ENCODE measurements at regions of chr7 and their contacts with region 1.

Region 1: GRCh38 chr7:158976849-158977593 is 120.7 kb downstream of the DYNC2I1 start:
- DNase-seq: peak; percentile 63
- H3K4me3 ChIP-seq: peak overlapping the region; percentile 14 to 29 (median 20)
- H3K27ac ChIP-seq: no peak overlapping the region
- H3K4me1 ChIP-seq: peaks cover 3% of the 10 kb centered on the region
- H3K27me3 ChIP-seq: no peaks in the 10 kb centered on the region
- CTCF ChIP-seq: peak; percentile 86 to 91

Region 2: GRCh38 chr7:158695726-158696452 is 281.1 kb before region 1 on chr7:
- CTCF ChIA-PET with region 1: interaction called, 3 read pairs
- dilution Hi-C with region 1: no loop called
- in situ Hi-C with region 1: loop called in 1 of 2 experiments (anchors 10 kb)
- intact Hi-C with region 1: loop called (anchors 1 kb)
- DNase-seq: peak; percentile 30
- H3K4me3 ChIP-seq: no peak overlapping the region
- H3K27ac ChIP-seq: no peak overlapping the region
- H3K4me1 ChIP-seq: no peaks in the 10 kb centered on the region
- H3K27me3 ChIP-seq: no peaks in the 10 kb centered on the region
- CTCF ChIP-seq: peak; percentile 33 to 56

Region 3: DNA sequence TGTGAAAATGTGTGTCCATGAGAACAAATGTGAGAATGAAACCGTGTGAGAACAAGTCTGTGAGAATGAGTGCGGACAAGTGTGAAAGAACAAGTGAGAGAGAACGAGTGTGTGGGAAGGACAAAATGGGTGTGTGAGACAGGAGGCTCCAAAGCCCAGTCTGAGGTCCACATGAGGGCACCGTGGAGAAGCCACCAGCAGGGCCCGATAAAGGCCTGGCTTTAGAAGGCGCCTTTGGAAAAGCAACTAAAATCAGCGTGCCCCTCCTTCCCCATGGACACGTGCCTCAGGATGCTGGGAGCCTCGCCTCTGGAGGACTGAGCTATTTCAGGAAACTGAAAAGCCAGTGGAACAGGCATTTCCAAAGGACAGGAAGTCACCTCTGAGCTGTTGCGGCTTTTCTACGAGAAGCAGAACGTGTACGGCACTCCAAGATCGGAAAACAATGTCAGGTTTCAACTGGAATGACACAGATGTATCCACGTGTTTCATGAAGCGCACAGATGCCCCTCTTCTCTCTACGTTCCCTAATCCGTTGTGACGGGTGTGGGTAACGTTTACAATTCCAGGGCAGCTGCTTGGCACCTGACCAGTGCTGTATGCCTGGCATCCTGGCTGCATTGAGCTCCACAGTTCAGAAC is 194.1 kb before region 1 on chr7:
- CTCF ChIA-PET with region 1: no interaction called
- dilution Hi-C with region 1: no loop called
- in situ Hi-C with region 1: no loop called
- intact Hi-C with region 1: loop called (anchors 2 kb)
- DNase-seq: no peak
- H3K4me3 ChIP-seq: no peak overlapping the region
- H3K27ac ChIP-seq: no peak overlapping the region
- H3K4me1 ChIP-seq: no peaks in the 10 kb centered on the region
- H3K27me3 ChIP-seq: no peaks in the 10 kb centered on the region
- CTCF ChIP-seq: peak; percentile 47 to 48

Region 4: GRCh38 chr7:158885624-158886023 is 91.4 kb before region 1 on chr7:
- CTCF ChIA-PET with region 1: interaction called, 6 read pairs
- dilution Hi-C with region 1: no loop called
- in situ Hi-C with region 1: no loop called
- intact Hi-C with region 1: loop called (anchors 5 kb)
- DNase-seq: no peak
- H3K4me3 ChIP-seq: no peak overlapping the region
- H3K27ac ChIP-seq: no peak overlapping the region
- H3K4me1 ChIP-seq: no peaks in the 10 kb centered on the region
- H3K27me3 ChIP-seq: no peaks in the 10 kb centered on the region
- CTCF ChIP-seq: peak; percentile 20 to 25

Region 5: GRCh38 chr7:159227433-159227832 is 250.4 kb after region 1 on chr7:
- CTCF ChIA-PET with region 1: no interaction called
- dilution Hi-C with region 1: no loop called
- in situ Hi-C with region 1: no loop called
- intact Hi-C with region 1: no loop called
- DNase-seq: no peak
- H3K4me3 ChIP-seq: no peak overlapping the region
- H3K27ac ChIP-seq: no peak overlapping the region
- H3K4me1 ChIP-seq: no peaks in the 10 kb centered on the region
- H3K27me3 ChIP-seq: no peaks in the 10 kb centered on the region
- CTCF ChIP-seq: no peak

Measured in mammary epithelial cell (primary cell).